ENCODE measurements at regions of chrX and their contacts with region 1.

Region 1: DNA sequence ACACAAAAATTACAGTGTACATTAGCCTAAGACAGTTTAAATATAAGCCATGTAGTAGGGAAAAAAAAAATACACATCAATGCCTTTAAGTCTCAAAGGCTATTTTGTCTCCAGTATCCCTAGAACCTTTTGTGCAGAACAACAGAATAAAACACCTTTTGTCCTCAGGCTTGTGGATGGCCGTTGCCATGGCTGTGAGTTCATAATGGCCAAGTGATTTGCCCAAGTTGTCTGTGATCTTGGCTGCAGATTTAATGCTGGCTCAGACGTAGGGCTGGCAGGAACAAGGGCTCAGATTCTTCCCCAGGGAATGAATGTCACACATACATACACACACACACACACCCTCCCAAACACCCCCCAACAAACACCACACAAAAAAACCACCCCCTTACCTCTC is 25.3 kb downstream of the GPM6B start:
- DNase-seq: no peak
- ATAC-seq: no peak
- H3K4me3 ChIP-seq: no peak overlapping the region
- H3K27ac ChIP-seq: no peak overlapping the region
- H3K4me1 ChIP-seq: no peaks in the 10 kb centered on the region; the same call in 1 of the 2 replicates
- H3K27me3 ChIP-seq: no peaks in the 10 kb centered on the region
- CTCF ChIP-seq: no peak

Region 2: GRCh38 chrX:13837290-13837745 is 45.8 kb after region 1 on chrX:
- CTCF ChIA-PET with region 1: no interaction called
- POLR2A ChIA-PET with region 1: interaction called, 11 read pairs
- intact Hi-C with region 1: no loop called
- DNase-seq: no peak
- ATAC-seq: no peak
- H3K4me3 ChIP-seq: no peak overlapping the region
- H3K27ac ChIP-seq: no peak overlapping the region
- H3K4me1 ChIP-seq: no peaks in the 10 kb centered on the region
- H3K27me3 ChIP-seq: no peaks in the 10 kb centered on the region
- CTCF ChIP-seq: no peak